ENCODE measurements at regions of chr19 and their contacts with region 1.

Region 1: DNA sequence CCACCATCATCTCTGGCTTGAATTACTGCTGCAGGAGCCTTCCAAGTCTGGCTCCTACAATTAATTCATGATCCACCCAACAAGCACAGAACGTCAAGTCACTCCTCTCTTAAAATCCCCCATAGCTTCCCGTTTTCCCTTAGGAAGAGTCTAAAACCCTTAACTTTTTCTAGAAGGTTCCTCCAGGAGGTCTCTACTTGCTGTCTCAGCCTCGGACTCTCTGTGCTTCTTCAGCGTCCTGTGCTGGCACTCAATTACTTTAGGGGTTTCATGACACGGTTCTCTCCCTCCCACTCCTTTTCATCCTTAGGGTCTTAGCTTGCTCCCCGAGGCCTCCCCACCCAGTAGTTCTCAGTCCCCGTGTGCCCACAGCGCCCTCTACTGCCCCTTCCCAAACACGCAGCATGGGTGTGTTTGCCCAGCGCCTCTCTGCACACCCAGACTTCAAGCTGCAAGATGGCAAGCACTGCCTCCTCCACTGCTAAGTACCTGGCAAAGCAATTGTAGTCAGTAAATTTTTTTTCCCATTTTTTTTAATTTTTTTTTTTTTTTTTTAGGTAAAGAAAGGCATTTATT is 25.8 kb upstream of the MAP3K10 start:
- DNase-seq: no peak
- H3K4me3 ChIP-seq: no peak overlapping the region
- CTCF ChIP-seq: peak; percentile 78

Region 2: DNA sequence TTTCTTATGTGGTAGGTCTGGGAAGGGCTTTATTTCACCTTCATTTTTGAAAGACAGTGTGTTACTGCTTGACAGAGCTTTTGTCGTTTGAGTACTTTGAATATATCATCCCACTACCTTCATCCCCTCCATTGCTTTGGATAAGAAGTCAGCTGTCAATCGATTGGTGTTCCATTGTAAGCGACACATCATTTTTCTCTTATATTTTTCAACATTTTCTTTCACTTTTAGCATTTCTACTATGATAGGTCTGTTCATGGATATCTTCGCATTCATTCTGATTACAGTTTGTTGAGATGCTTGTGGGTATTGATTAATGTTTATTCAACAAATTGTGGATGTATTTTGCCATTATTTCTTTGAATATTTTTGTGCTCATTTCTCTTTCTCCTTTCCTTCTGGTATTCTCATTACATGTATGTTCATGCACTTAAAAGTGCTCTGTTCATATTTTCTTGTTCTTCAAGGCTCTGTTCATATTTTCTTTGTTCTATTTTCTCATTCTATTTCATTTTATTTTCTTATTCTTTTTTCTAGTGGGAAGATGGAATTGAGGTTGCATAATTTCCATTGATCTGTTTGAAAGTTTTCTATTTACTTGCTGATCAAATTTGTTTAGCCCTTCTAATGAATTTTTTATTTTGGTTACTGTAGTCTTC is 139.4 kb before region 1 on chr19:
- CTCF ChIA-PET with region 1: no interaction called
- POLR2A ChIA-PET with region 1: no interaction called
- DNase-seq: no peak
- H3K4me3 ChIP-seq: no peak overlapping the region
- CTCF ChIP-seq: no peak

Region 3: GRCh38 chr19:40084948-40085347 is 80.5 kb before region 1 on chr19:
- CTCF ChIA-PET with region 1: no interaction called
- POLR2A ChIA-PET with region 1: no interaction called
- DNase-seq: no peak
- H3K4me3 ChIP-seq: no peak overlapping the region
- CTCF ChIP-seq: no peak

Region 4: DNA sequence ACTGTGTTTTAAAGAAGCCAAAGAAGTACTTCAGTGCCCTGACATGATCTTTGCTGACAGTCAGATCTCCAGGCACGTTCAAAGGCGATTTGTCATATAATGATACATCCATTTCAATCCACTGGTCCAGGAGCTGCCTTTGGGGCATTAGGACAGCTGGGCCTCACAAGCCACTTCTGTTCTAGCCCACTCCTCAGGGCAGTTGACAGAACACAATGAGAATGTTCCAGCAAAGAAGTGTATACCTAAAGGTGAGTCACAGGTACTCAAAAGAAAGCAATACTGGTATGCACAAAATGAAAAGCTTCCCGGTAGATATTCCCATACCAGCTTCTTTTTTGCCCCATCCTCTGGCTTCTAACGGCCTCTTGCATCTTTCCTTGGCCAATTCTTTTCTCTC is 13.3 kb after region 1 on chr19:
- CTCF ChIA-PET with region 1: interaction called, 12 read pairs
- POLR2A ChIA-PET with region 1: no interaction called
- DNase-seq: no peak
- H3K4me3 ChIP-seq: no peak overlapping the region
- CTCF ChIP-seq: no peak

Region 5: DNA sequence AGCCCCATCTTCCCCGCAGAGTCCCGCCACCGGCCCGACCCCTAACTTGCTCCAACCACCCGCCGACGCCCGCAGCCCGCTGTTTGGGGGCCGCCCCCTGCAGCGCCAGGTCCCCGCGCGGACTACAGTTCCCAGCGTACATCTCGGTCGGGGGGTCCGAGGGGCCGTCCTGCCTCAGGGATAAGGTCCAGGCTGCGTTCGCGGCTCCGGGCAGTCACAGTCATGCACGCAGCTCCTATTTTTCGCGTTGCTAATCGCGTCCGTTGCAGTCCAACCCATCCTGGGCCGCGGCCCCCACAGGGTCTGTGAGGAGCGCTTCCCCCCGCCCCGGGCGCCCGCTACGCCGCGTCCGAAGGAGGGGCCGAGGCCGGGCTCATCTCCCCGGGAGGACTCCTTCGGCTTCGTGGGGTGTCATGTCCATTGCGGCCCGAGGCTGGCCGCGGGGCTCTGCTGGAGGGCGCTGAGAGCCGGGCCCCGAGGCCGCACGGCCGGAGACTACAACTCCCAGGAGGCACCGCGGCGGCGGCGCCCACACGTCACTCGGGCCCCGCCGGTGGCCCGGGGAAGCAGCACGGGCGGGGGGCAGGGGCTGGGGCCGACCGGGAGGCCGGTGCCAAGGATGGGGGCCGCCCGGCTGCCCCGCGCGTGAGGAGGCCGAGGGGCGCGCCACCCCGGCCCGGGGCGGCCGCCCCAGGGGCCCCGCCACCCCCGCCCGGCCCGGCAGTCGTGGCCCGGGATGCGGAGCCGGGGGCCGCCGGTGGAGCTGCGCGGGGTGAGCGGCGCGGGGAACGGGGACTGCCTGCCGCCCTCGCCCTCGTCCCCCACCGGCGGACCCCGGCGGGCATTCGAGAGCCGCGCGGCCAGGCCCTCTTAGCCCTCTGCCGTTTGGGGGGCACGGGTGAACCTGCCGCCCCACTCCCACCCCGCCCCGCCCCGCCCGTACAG is 25.7 kb after region 1 on chr19 and contains the start of gene MAP3K10:
- CTCF ChIA-PET with region 1: interaction called, 10 read pairs
- POLR2A ChIA-PET with region 1: no interaction called
- DNase-seq: no peak
- H3K4me3 ChIP-seq: peak within 1 kb of the TSS; percentile 75
- CTCF ChIP-seq: no peak